Ascending aorta (tissue), 2 donors: ENCODE measurements at regions of chr12 and their contacts with region 1.

Region 1: DNA sequence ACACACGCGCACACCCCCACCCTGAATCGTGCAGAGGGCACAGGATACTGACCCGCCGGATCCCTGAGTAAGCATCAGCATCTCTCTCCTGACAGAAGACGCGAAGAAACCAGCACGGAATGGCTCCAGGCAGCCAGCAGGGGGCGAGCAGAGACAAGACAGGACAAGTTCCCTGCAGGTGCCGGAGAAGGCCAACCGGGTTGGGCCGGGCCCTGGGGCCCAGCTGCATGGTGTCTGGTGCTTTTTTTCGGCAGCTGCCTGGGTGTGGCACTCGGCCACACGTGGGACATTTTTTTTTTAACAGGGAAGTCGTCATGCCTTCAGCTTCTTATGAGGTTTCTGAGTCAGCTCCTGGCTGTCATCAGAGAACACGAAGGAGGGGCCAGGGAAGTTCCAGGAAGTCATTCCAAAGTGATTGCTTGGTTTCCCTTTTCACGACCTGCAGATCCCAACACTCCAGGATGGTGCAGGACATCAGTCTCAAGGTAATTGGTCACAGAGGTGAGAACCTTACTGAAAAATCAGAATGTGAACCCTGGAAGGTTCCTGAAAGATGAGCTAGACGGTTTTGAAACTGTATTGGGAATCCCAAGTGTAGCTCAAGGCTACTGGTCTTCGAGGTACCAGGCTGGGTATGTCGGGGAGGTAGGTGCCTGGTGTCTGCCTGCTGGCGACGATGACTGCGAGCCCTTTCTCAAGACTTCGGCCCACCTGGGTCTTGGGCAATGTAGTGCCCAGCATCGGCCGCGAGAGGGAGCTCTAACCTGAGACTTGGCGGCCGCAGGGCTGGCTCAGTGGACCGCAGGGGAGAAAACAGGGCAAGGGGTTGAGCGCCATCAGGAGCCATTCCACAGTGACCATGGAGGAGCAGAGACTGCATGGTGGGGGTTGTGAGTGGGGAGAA is 190.8 kb upstream of the PRMT8 start:
- DNase-seq: peak; percentile 62 to 90
- H3K4me3 ChIP-seq: peak overlapping the region; percentile 41 to 54
- H3K27ac ChIP-seq: peak overlapping the region; percentile 31 to 39
- H3K4me1 ChIP-seq: peaks cover 8 to 25% of the 10 kb centered on the region in 2 donors
- H3K27me3 ChIP-seq: no peaks in the 10 kb centered on the region
- CTCF ChIP-seq: peak; percentile 90 to 98 (median 98)

Region 2: GRCh38 chr12:3342056-3342455 is 41.9 kb after region 1 on chr12:
- intact Hi-C with region 1: no loop called
- DNase-seq: no peak
- H3K4me3 ChIP-seq: no peak overlapping the region
- H3K27ac ChIP-seq: no peak overlapping the region
- H3K4me1 ChIP-seq: no peaks in the 10 kb centered on the region
- H3K27me3 ChIP-seq: no peaks in the 10 kb centered on the region
- CTCF ChIP-seq: peak in 1 of 3 experiments; percentile 17

Region 3: GRCh38 chr12:3389986-3390385 is 89.8 kb after region 1 on chr12:
- intact Hi-C with region 1: no loop called
- DNase-seq: no peak
- H3K4me3 ChIP-seq: no peak overlapping the region
- H3K27ac ChIP-seq: no peak overlapping the region
- H3K4me1 ChIP-seq: no peaks in the 10 kb centered on the region
- H3K27me3 ChIP-seq: no peaks in the 10 kb centered on the region
- CTCF ChIP-seq: no peak

Region 4: DNA sequence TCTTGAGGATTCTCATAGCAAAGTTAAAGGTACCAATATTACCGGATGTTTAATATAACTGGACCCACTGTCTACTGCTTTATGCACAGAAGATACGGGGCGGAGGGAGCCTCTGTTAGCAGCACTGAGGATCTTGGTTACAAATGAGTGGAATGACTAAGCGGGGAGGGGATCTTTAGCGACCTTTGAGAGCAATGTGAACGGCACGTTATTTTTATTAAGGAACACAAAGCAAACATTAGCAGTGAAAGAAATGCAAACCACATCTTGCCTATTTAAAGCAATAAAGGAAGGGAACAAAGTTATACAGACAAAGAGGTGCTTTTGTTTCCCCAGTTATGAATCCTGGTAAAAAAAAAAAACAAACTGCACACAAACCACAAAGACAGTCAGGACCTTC is 163.7 kb after region 1 on chr12:
- intact Hi-C with region 1: no loop called
- DNase-seq: no peak
- H3K4me3 ChIP-seq: no peak overlapping the region
- H3K27ac ChIP-seq: no peak overlapping the region
- H3K4me1 ChIP-seq: no peaks in the 10 kb centered on the region
- H3K27me3 ChIP-seq: no peaks in the 10 kb centered on the region
- CTCF ChIP-seq: no peak

Region 5: DNA sequence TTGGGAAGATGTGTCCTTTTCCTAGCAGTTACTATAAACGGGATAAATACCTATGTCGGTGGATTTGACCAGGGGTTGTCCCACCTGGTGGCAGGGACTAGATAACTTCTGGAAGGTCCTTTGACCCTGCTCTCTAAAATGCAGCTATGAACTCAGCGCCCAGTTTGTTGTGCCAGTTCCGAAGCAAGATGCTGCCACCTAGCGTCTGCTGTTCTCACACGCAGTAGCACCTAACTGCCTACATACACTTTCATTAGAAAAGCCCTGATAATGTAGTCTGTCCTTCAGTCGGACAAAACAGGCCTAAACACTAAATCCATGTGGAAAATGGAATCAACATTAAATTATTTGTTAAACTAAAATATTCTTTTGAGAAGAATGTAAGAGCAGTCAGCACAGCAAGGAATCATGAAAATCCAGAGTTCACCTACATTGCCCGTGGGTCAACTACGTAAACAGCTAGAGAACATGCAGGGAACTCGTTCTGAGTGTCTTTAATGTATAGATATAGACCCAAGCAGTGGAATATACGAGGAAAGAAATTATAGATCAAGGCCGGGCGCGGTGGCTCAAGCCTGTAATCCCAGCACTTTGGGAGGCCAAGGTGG is 503.8 kb after region 1 on chr12:
- intact Hi-C with region 1: loop called (anchors 1 kb)
- DNase-seq: peak in 1 of 2 donors; percentile 78
- H3K4me3 ChIP-seq: no peak overlapping the region
- H3K27ac ChIP-seq: no peak overlapping the region
- H3K4me1 ChIP-seq: no peaks in the 10 kb centered on the region
- H3K27me3 ChIP-seq: no peaks in the 10 kb centered on the region
- CTCF ChIP-seq: peak; percentile 44 to 77 (median 53)